Sigmoid colon (tissue), 7 donors: ENCODE measurements at regions of chr1 and their contacts with region 1.

Region 1: DNA sequence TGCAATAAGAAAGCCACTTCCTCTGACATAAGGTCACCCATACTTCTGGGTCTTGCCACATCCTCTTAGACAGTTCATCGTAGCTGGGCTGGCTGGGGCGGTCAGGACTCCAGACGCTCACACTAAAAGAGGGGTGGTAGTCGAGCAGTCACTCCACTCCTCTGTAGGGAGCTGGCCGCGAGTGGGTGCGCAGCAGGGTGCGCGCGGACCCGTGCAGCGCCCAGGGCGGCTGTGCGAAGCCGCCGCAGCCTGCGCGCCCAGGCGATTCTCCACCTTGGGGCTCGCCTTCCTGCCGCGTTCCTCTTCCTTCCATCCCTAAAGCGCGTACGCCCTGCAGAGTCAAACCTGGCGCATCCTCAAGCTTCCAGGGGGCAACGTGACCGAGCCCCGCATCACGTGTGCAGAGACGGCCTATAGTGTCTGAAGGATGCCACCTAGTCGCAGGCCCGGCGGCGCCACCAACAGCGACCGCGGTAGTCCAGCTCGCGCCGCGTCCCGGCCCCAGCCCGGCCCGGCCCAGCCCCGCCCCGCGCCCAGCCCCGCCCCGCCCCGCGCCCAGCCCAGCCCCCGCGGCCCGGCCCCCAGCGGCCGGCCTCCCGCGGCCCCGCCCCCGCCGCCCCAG is 360 bp upstream of the PRDX6 start:
- DNase-seq: peak; percentile 97
- H3K4me3 ChIP-seq: peak overlapping the region; percentile 75 to 92 (median 85)
- H3K27ac ChIP-seq: peak overlapping the region; percentile 98 to 99 (median 99)
- H3K4me1 ChIP-seq: peaks cover 0 to 52% (median 46%) of the 10 kb centered on the region in 4 donors
- H3K27me3 ChIP-seq: no peaks in the 10 kb centered on the region
- CTCF ChIP-seq: no peak
- EP300 ChIP-seq: no peak
- POLR2A ChIP-seq: peak; percentile 18 to 27

Region 2: DNA sequence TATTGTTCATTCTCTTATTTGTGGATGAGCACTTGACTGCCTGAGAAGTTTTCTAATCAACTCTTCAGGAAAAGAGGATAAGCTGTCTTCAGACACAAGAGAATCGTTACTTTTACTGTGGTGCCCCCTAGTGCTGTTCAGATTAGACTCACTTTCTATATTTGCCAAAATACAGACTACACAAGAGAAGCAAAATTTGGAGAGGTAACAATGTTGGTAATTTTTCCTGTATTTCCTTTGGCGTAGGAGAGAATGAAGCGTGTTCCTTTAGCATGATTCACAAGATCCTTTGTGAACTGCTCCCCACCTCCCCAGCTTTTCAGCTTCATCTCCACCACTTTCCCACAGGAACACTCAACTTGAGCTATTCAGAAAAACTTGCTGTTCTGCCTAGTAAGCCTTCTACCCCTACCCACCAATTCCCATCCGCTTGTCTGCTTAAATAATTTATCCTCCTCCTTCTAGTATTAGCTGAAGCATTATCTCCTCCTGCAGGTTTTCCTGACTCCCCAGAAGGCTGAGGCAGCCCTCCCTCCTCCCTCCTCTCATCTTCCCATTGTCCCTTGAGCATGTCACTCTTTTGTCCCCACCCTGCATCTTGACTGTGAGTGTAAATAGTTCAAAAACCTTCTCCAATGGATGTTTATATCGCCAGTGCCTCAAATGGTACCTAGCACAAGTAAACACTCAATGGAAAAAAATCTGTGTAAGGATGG is 274.2 kb before region 1 on chr1:
- intact Hi-C with region 1: no loop called
- DNase-seq: no peak
- H3K4me3 ChIP-seq: no peak overlapping the region
- H3K27ac ChIP-seq: peak overlapping the region in 1 of 4 donors; percentile 20
- H3K4me1 ChIP-seq: peaks cover 0 to 28% (median 11%) of the 10 kb centered on the region in 4 donors
- H3K27me3 ChIP-seq: no peaks in the 10 kb centered on the region
- CTCF ChIP-seq: peak; percentile 17 to 58 (median 46)
- EP300 ChIP-seq: no peak
- POLR2A ChIP-seq: no peak

Region 3: GRCh38 chr1:173451981-173452380 is 24.8 kb before region 1 on chr1:
- intact Hi-C with region 1: loop called (anchors 2 kb)
- DNase-seq: peak; percentile 86
- H3K4me3 ChIP-seq: no peak overlapping the region
- H3K27ac ChIP-seq: peak overlapping the region; percentile 49 to 83 (median 57)
- H3K4me1 ChIP-seq: peaks cover 0 to 14% (median 10%) of the 10 kb centered on the region in 4 donors
- H3K27me3 ChIP-seq: no peaks in the 10 kb centered on the region
- CTCF ChIP-seq: no peak
- EP300 ChIP-seq: no peak
- POLR2A ChIP-seq: no peak

Region 4: DNA sequence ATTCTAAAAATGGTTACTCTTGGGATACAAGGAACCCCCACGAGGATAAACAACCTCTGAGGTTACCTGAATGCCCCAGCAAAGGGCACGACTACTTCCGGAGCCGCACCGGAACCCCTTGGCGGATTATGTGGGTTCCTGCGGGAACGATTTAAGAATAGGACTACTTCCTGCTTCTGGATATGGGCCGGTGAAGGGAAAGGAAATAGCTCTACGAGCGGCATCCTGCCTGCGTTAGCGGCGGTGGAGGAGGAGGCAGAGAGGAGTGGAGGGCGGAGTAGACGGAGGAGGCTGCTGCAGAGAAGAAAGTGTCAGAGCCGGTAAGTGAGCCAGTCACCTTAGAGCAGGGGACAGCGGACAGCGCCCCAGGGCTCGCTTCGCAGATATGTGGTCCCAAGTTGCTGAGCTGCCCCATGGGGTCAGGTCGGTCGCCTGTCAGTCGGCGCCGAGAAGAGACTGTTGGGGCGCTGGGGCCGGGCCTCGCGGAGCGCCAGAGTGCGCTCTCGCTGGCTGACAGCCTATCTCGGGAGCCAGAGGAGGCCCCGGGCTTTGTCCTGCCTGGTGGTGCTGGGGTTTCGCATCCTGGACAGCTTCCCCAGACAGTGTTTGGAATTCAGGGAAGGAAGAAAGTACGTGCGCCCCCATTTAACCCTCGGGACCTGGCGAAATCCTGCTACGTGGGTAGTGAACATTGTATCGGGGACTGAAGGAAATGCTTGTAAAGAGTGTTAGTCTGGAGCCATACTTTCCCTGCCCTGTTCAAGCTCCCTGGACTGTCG is 238.2 kb after region 1 on chr1 and contains the start of gene KLHL20:
- intact Hi-C with region 1: loop called (anchors 2 kb)
- DNase-seq: peak; percentile 89
- H3K4me3 ChIP-seq: peak within 1 kb of the TSS; percentile 60 to 82 (median 70)
- H3K27ac ChIP-seq: peak within 1 kb of the TSS; percentile 87 to 94 (median 94)
- H3K4me1 ChIP-seq: peaks cover 0 to 27% (median 19%) of the 10 kb centered on the region in 4 donors
- H3K27me3 ChIP-seq: peaks cover 0 to 14% (median 0%) of the 10 kb centered on the region in 3 donors
- CTCF ChIP-seq: peak in 2 of 4 experiments; percentile 21 to 38
- EP300 ChIP-seq: no peak
- POLR2A ChIP-seq: peak; percentile 51 to 61
- total RNA-seq, gene KLHL20: 35.5 to 57.7 (median 42.6) TPM